Adrenal gland (tissue), 19 donors: ENCODE measurements at regions of chr12 and their contacts with region 1.

Region 1: GRCh38 chr12:50314629-50315312 is 31.5 kb upstream of the LIMA1 start:
- DNase-seq: peak in 1 of 7 donors; percentile 43
- H3K4me3 ChIP-seq: no peak overlapping the region
- H3K27ac ChIP-seq: no peak overlapping the region
- H3K4me1 ChIP-seq: no peaks in the 10 kb centered on the region
- H3K27me3 ChIP-seq: no peaks in the 10 kb centered on the region
- CTCF ChIP-seq: peak; percentile 11 to 72 (median 56)
- POLR2A ChIP-seq: no peak

Region 2: GRCh38 chr12:50187084-50187900 is 127.5 kb before region 1 on chr12:
- intact Hi-C with region 1: loop called in 1 of 2 experiments (anchors 10 kb)
- DNase-seq: no peak
- H3K4me3 ChIP-seq: no peak overlapping the region
- H3K27ac ChIP-seq: peak overlapping the region in 1 of 5 donors; percentile 66
- H3K4me1 ChIP-seq: peaks cover 0 to 9% of the 10 kb centered on the region in 2 donors
- H3K27me3 ChIP-seq: no peaks in the 10 kb centered on the region
- CTCF ChIP-seq: no peak
- POLR2A ChIP-seq: no peak

Region 3: DNA sequence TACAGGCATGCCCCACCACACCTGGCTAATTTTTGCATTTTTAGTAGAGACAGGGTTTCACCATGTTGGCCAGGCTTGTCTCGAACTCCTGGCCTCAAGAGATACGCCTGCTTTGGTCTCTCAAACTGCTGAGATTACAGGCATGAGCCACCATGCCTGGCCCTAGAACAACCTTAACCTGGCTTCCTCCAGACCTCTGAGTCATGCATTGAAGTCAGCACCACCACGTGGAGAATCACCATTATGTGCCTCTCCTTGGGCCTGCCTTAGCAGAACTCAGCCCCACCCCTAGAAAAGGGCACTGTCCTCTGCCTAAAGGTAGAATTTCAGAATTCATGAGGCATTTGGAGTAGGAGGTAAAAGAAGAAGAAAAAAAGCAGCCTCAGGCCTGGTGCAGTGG is 80.4 kb before region 1 on chr12:
- intact Hi-C with region 1: loop called in 1 of 2 experiments (anchors 10 kb)
- DNase-seq: peak in 5 of 7 donors; percentile 58 to 66 (median 64)
- H3K4me3 ChIP-seq: no peak overlapping the region
- H3K27ac ChIP-seq: no peak overlapping the region
- H3K4me1 ChIP-seq: peaks cover 0 to 9% of the 10 kb centered on the region in 2 donors
- H3K27me3 ChIP-seq: no peaks in the 10 kb centered on the region
- CTCF ChIP-seq: no peak
- POLR2A ChIP-seq: no peak